ENCODE measurements at regions of chr5 and their contacts with region 1.

Region 1: GRCh38 chr5:178859625-178860531 is at the start of gene ZNF354B:
- DNase-seq: peak; percentile 90 to 93
- ATAC-seq: peak; percentile 97 to 100 (median 100)
- H3K4me3 ChIP-seq: peak within 1 kb of the TSS; percentile 96
- H3K27ac ChIP-seq: peak within 1 kb of the TSS; percentile 91
- H3K4me1 ChIP-seq: peaks cover 6% of the 10 kb centered on the region
- H3K27me3 ChIP-seq: no peaks in the 10 kb centered on the region
- CTCF ChIP-seq: peak; percentile 11
- total RNA-seq, gene ZNF354B: 5.5 to 7.2 (median 6.1) TPM

Region 2: GRCh38 chr5:179060116-179061008 is 200.5 kb after region 1 on chr5 and contains the start of gene ZNF354C:
- intact Hi-C with region 1: loop called (anchors 2 to 5 kb)
- DNase-seq: peak; percentile 92 to 94
- ATAC-seq: peak; percentile 97 to 100 (median 100)
- H3K4me3 ChIP-seq: peak within 1 kb of the TSS; percentile 82
- H3K27ac ChIP-seq: peak within 1 kb of the TSS; percentile 79
- H3K4me1 ChIP-seq: peaks cover 10% of the 10 kb centered on the region
- H3K27me3 ChIP-seq: no peaks in the 10 kb centered on the region
- CTCF ChIP-seq: no peak
- total RNA-seq, gene ZNF354C: 2.2 to 3.7 (median 2.7) TPM

Measured in psoas muscle (tissue), 8 donors.